CD8-positive, alpha-beta memory T cell (primary cell): ENCODE measurements at regions of chr9 and their contacts with region 1.

Region 1: DNA sequence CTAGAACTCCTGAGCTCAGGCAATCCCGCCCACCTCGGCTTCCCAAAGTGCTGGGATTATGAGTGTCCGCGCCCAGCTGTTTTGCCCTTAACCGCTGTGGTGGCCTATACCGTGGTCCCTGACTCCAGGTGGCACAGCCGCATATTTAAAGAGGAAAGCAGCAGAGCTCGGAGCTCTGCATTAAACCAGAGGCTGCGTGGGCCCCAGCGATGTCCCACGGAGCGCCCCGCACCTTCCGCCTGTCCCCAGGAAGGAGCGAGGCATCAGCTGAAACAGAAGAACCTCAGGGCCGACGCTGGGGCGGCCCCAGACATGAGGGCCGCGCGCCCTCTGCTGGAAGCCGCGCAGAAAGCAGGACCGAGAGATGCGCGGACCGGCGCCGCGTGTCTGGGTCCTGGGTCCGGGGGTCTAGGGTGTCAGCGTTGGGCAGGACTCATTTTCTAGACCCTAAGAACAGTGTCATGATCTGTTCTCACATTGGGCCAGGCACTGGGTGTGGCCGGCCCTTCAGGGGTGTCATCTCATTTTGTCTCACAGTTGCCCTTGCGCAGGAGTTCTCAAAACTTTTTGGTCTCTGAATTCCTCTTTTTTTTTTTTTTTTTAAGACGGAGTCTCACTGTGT is 37.7 kb downstream of the LAMC3 start:
- DNase-seq: peak; percentile 38 to 72 (median 53)
- H3K4me3 ChIP-seq: no peak overlapping the region
- H3K4me3 Mint-ChIP-seq: peak overlapping the region in 2 of 7 donors; percentile 18 to 38
- H3K27ac ChIP-seq: no peak overlapping the region
- H3K27ac Mint-ChIP-seq: no peak overlapping the region
- H3K4me1 ChIP-seq: peaks cover 4% of the 10 kb centered on the region
- H3K4me1 Mint-ChIP-seq: peaks cover 0 to 5% (median 2%) of the 10 kb centered on the region in 3 donors
- H3K27me3 ChIP-seq: peaks cover 27% of the 10 kb centered on the region
- H3K27me3 Mint-ChIP-seq: peaks cover 5 to 14% of the 10 kb centered on the region in 2 donors

Region 2: GRCh38 chr9:130707225-130707976 is 339.3 kb before region 1 on chr9:
- CTCF ChIA-PET with region 1: interaction called, 20 read pairs
- POLR2A ChIA-PET with region 1: no interaction called
- DNase-seq: peak; percentile 55 to 77 (median 62)
- H3K4me3 ChIP-seq: no peak overlapping the region
- H3K4me3 Mint-ChIP-seq: no peak overlapping the region
- H3K27ac ChIP-seq: no peak overlapping the region
- H3K27ac Mint-ChIP-seq: peak overlapping the region in 3 of 8 donors; percentile 38 to 55 (median 53)
- H3K4me1 ChIP-seq: peaks cover 6% of the 10 kb centered on the region
- H3K4me1 Mint-ChIP-seq: peaks cover 6 to 12% (median 7%) of the 10 kb centered on the region in 3 donors
- H3K27me3 ChIP-seq: no peaks in the 10 kb centered on the region
- H3K27me3 Mint-ChIP-seq: no peaks in the 10 kb centered on the region

Region 3: GRCh38 chr9:130866474-130866965 is 180.2 kb before region 1 on chr9:
- CTCF ChIA-PET with region 1: interaction called, 14 read pairs
- POLR2A ChIA-PET with region 1: no interaction called
- DNase-seq: peak in 3 of 5 donors; percentile 10 to 31 (median 13)
- H3K4me3 ChIP-seq: no peak overlapping the region
- H3K4me3 Mint-ChIP-seq: no peak overlapping the region
- H3K27ac ChIP-seq: no peak overlapping the region
- H3K27ac Mint-ChIP-seq: peak overlapping the region in 3 of 8 donors; percentile 30 to 86 (median 60)
- H3K4me1 ChIP-seq: peaks cover 2% of the 10 kb centered on the region
- H3K4me1 Mint-ChIP-seq: peaks cover 4 to 13% (median 7%) of the 10 kb centered on the region in 3 donors
- H3K27me3 ChIP-seq: no peaks in the 10 kb centered on the region
- H3K27me3 Mint-ChIP-seq: peaks cover 0 to 1% of the 10 kb centered on the region in 2 donors

Region 4: GRCh38 chr9:130882696-130883225 is 163.9 kb before region 1 on chr9:
- CTCF ChIA-PET with region 1: no interaction called
- POLR2A ChIA-PET with region 1: no interaction called
- DNase-seq: no peak
- H3K4me3 ChIP-seq: no peak overlapping the region
- H3K4me3 Mint-ChIP-seq: no peak overlapping the region
- H3K27ac ChIP-seq: no peak overlapping the region
- H3K27ac Mint-ChIP-seq: no peak overlapping the region
- H3K4me1 ChIP-seq: no peaks in the 10 kb centered on the region
- H3K4me1 Mint-ChIP-seq: no peaks in the 10 kb centered on the region
- H3K27me3 ChIP-seq: no peaks in the 10 kb centered on the region
- H3K27me3 Mint-ChIP-seq: no peaks in the 10 kb centered on the region

Region 5: GRCh38 chr9:131056781-131057506 is 10.3 kb after region 1 on chr9:
- CTCF ChIA-PET with region 1: interaction called, 24 read pairs
- POLR2A ChIA-PET with region 1: no interaction called
- DNase-seq: no peak
- H3K4me3 ChIP-seq: no peak overlapping the region
- H3K4me3 Mint-ChIP-seq: no peak overlapping the region
- H3K27ac ChIP-seq: no peak overlapping the region
- H3K27ac Mint-ChIP-seq: no peak overlapping the region
- H3K4me1 ChIP-seq: no peaks in the 10 kb centered on the region
- H3K4me1 Mint-ChIP-seq: no peaks in the 10 kb centered on the region
- H3K27me3 ChIP-seq: peaks cover 22% of the 10 kb centered on the region
- H3K27me3 Mint-ChIP-seq: peaks cover 0 to 5% of the 10 kb centered on the region in 2 donors

Region 6: GRCh38 chr9:131125128-131126058 is 78.7 kb after region 1 on chr9 and contains the start of gene NUP214:
- CTCF ChIA-PET with region 1: no interaction called
- POLR2A ChIA-PET with region 1: no interaction called
- DNase-seq: peak; percentile 98 to 100 (median 99)
- H3K4me3 ChIP-seq: peak within 1 kb of the TSS; percentile 86
- H3K4me3 Mint-ChIP-seq: peak within 1 kb of the TSS; percentile 97 to 100 (median 99)
- H3K27ac ChIP-seq: peak within 1 kb of the TSS; percentile 99
- H3K27ac Mint-ChIP-seq: peak within 1 kb of the TSS; percentile 96 to 100 (median 99)
- H3K4me1 ChIP-seq: peaks cover 12% of the 10 kb centered on the region
- H3K4me1 Mint-ChIP-seq: peaks cover 29 to 41% (median 36%) of the 10 kb centered on the region in 3 donors
- H3K27me3 ChIP-seq: no peaks in the 10 kb centered on the region
- H3K27me3 Mint-ChIP-seq: peaks cover under 1 to 3% of the 10 kb centered on the region in 2 donors
- total RNA-seq, gene NUP214: 69.2 to 69.5 TPM

Region 7: GRCh38 chr9:132354637-132355355 is 1308.1 kb after region 1 on chr9 and contains the start of gene SETX:
- CTCF ChIA-PET with region 1: no interaction called
- POLR2A ChIA-PET with region 1: interaction called, 10 read pairs
- DNase-seq: peak; percentile 86 to 97 (median 94)
- H3K4me3 ChIP-seq: peak within 1 kb of the TSS; percentile 77
- H3K4me3 Mint-ChIP-seq: peak within 1 kb of the TSS; percentile 85 to 97 (median 93)
- H3K27ac ChIP-seq: peak within 1 kb of the TSS; percentile 95
- H3K27ac Mint-ChIP-seq: peak within 1 kb of the TSS; percentile 92 to 99 (median 96)
- H3K4me1 ChIP-seq: peaks cover 37% of the 10 kb centered on the region
- H3K4me1 Mint-ChIP-seq: peaks cover 41 to 47% (median 46%) of the 10 kb centered on the region in 3 donors
- H3K27me3 ChIP-seq: no peaks in the 10 kb centered on the region
- H3K27me3 Mint-ChIP-seq: peaks cover 0 to 4% of the 10 kb centered on the region in 2 donors
- total RNA-seq, gene SETX: 37.3 to 39.3 TPM